Mammary epithelial cell (primary cell): ENCODE measurements at regions of chr11 and their contacts with region 1.

Region 1: DNA sequence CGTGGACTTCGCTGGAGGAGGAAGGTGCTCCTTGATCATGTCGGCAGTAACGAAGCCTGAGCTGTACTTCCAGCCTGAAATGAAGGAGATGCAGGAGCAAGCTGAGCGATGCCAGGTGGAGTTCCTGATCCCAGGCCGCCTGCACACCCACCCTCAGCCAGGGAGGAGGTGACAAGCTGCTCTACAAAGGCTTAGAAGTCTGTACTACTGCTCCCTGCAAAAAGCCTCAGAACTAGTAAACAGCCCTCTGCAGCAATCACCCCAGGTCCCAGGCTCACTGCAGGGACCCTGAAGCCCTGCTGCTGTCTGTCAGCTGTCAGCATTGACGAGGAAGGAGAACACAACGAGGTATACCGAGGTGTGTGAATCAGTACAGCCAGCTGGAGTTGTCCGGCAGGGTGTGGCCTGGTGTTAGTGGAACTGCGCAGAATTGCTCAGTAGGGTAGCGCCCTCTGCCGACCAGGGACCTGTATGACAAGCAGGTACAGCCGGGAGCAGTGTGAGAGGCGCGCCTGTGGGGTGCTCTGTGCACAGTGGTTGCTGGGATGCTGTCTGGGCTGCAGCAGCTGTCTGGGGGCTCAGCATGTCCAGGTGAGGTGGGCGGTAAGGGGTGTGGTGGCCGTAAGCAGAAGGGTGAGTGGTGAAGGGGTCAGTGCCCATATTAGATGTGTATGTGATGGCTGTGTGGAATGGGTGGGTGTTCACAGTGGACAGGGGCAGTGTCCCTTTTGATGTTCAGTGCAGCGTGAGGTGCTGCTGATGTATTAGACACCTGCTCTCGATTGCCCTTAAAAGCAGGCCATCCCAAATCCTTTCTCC is 7.6 kb downstream of the CYB5R2 start:
- DNase-seq: peak; percentile 75
- H3K4me3 ChIP-seq: no peak overlapping the region
- H3K27ac ChIP-seq: no peak overlapping the region
- H3K4me1 ChIP-seq: peaks cover 23% of the 10 kb centered on the region
- H3K27me3 ChIP-seq: no peaks in the 10 kb centered on the region
- CTCF ChIP-seq: peak; percentile 89 to 96

Region 2: GRCh38 chr11:7353100-7353499 is 312.6 kb before region 1 on chr11:
- CTCF ChIA-PET with region 1: no interaction called
- dilution Hi-C with region 1: no loop called
- in situ Hi-C with region 1: no loop called
- intact Hi-C with region 1: loop called (anchors 2 kb)
- DNase-seq: peak; percentile 24
- H3K4me3 ChIP-seq: no peak overlapping the region
- H3K27ac ChIP-seq: no peak overlapping the region
- H3K4me1 ChIP-seq: no peaks in the 10 kb centered on the region
- H3K27me3 ChIP-seq: peaks cover 3% of the 10 kb centered on the region
- CTCF ChIP-seq: peak; percentile 67 to 75

Region 3: DNA sequence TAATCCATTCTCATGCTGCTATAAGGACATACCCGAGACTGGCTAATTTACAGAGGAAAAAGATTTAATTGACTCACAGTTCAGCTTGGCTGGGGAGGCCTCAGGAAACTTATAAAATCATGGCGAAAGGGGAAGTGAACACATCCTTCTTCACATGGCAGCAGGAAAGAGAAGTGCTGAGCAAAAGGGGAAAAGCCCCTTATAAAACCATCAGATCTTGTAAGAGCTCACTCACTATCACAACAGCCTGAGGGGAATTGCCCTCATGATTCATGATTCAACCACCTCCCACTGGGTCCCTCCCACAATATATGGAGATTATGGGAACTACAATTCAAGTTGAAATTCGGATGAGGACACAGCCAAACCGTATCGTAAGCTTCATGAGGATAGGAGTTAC is 11.4 kb after region 1 on chr11:
- CTCF ChIA-PET with region 1: no interaction called
- dilution Hi-C with region 1: no loop called
- in situ Hi-C with region 1: no loop called
- intact Hi-C with region 1: loop called (anchors 1 kb)
- DNase-seq: peak; percentile 94
- H3K4me3 ChIP-seq: no peak overlapping the region
- H3K27ac ChIP-seq: peak overlapping the region; percentile 59
- H3K4me1 ChIP-seq: peaks cover 23% of the 10 kb centered on the region
- H3K27me3 ChIP-seq: no peaks in the 10 kb centered on the region
- CTCF ChIP-seq: no peak